Right ventricle myocardium superior (tissue), 1 donor: ENCODE measurements at regions of chr2 and their contacts with region 1.

Region 1: DNA sequence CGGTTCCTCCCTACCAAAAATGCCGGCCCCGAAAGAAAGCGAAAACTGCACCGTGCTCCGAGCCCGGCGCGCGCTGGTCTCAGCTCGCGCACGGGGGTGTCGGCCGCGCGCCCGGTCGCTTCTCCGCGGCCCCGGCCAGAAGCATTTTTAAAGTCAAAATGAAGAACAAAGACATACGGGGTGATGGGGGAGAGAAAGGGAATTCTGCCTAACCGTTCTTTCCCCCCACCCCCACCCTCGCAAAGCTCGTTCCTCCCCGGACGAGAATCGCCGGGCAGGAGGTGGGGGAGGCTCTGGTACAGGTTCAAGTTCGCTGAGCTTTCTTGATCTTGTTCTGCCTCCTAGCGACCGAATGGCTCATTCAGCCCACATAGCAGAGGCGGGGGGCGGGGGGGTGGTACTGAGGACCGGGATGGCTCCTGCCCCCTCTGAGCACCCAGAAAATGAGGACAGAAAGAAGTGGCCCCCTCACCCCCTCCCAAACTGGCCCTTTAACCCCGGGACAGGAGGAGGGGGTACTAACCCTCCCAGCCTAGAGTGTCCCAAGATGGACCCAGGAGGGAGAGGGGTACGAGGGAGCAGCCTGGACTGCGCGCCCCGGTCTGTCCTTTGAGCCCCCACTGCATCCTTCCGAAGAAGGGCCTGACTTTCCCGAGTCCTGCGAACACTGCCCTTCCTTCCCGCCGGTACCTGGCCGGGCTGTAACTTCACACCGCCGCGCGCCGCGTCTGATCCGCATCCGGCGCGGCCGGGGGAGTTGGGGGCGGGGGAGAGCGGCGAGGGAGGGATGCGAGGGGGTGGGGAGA is 3.1 kb downstream of the BCL11A start:
- DNase-seq: peak; percentile 69
- ATAC-seq: peak; percentile 79

Region 2: DNA sequence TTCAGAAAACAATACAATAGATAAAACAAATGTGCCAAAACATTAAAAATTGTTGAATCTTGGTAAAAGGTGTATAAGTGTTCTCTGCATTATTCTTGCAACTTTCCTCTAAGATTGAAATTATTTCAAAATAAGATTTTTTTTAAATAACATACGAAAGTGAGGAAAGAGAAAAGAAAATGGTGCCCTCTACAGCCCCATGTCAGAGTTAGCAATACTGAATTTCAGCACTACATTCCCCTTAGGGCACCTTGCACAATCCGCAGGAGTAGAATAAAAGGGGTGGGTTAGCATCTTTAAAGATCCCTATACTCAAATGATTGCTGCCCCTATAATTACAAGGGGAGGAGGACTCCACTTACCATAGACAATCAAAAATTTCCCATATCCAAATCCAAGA is 430.6 kb before region 1 on chr2:
- intact Hi-C with region 1: loop called (anchors 10 kb)
- DNase-seq: no peak
- ATAC-seq: no peak

Region 3: GRCh38 chr2:60337140-60337494 is 213.3 kb before region 1 on chr2:
- intact Hi-C with region 1: loop called (anchors 5 kb)
- DNase-seq: peak; percentile 51
- ATAC-seq: peak; percentile 87